ENCODE measurements at regions of chr4 and their contacts with region 1.

Region 1: GRCh38 chr4:183828125-183828524 is 77.0 kb upstream of the STOX2 start:
- DNase-seq: peak; percentile 62
- H3K4me3 Mint-ChIP-seq: no peak overlapping the region
- H3K27ac Mint-ChIP-seq: no peak overlapping the region
- H3K4me1 Mint-ChIP-seq: peaks cover 8% of the 10 kb centered on the region
- H3K27me3 Mint-ChIP-seq: no peaks in the 10 kb centered on the region

Region 2: GRCh38 chr4:184094532-184095159 is 266.5 kb after region 1 on chr4:
- intact Hi-C with region 1: loop called (anchors 5 kb)
- DNase-seq: no peak
- H3K4me3 Mint-ChIP-seq: no peak overlapping the region
- H3K27ac Mint-ChIP-seq: no peak overlapping the region
- H3K4me1 Mint-ChIP-seq: peaks cover 2% of the 10 kb centered on the region
- H3K27me3 Mint-ChIP-seq: peaks cover 15% of the 10 kb centered on the region

Measured in activated CD4-positive, alpha-beta T cell treated with anti-CD3 and anti-CD28 coated beads, Interleukin-2, amount 10 ng/mL, durations not matched to agents 24 days and 14 days (primary cell).